ENCODE measurements at regions of chr3 and their contacts with region 1.

Region 1: DNA sequence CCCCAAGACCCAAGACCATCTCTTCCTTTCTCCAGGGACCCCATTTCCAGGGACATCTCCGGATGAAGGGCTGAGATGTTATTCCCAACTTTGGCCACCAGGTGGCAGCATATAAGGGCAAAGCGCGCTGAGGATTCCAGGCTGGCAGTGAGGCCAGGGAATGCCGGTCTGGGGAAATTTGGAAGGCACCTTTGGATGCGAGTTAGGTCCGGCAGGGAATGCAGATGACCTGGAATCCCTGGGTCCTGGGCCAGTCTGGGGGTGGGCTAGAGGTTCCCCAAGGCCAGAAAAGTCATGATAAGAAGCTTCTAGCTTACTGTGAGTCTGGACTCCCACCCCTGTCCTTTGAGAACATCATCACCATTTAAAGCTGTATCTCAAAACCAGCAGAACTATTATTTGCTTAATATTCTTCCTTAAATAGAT is 1.6 kb upstream of the CHST13 start:
- DNase-seq: peak; percentile 42
- H3K4me3 Mint-ChIP-seq: no peak overlapping the region
- H3K27ac Mint-ChIP-seq: no peak overlapping the region
- H3K4me1 Mint-ChIP-seq: no peaks in the 10 kb centered on the region
- H3K27me3 Mint-ChIP-seq: peaks cover 28% of the 10 kb centered on the region

Region 2: DNA sequence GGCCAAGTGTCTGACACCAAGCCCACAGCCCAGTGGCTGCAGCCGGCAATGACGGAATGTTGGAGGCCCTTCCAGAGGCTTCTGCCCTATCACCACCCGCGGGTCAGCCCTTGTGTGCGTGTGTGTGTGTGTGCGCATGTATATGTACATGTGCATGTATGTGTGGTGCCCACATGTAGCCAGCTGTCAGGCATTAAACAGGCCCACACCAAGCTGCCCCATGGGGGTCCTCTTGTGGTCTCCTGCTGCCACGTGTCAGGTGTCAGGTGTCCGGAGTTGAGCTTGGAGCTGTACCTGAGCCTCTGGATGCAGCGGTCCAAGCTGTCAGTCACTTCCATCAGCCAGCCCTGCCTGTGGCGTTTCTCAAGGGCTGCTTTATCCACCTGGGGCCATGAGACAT is 18.7 kb before region 1 on chr3:
- CTCF ChIA-PET with region 1: interaction called, 11 read pairs
- intact Hi-C with region 1: no loop called
- DNase-seq: no peak
- H3K4me3 Mint-ChIP-seq: no peak overlapping the region
- H3K27ac Mint-ChIP-seq: no peak overlapping the region
- H3K4me1 Mint-ChIP-seq: no peaks in the 10 kb centered on the region
- H3K27me3 Mint-ChIP-seq: no peaks in the 10 kb centered on the region

Region 3: DNA sequence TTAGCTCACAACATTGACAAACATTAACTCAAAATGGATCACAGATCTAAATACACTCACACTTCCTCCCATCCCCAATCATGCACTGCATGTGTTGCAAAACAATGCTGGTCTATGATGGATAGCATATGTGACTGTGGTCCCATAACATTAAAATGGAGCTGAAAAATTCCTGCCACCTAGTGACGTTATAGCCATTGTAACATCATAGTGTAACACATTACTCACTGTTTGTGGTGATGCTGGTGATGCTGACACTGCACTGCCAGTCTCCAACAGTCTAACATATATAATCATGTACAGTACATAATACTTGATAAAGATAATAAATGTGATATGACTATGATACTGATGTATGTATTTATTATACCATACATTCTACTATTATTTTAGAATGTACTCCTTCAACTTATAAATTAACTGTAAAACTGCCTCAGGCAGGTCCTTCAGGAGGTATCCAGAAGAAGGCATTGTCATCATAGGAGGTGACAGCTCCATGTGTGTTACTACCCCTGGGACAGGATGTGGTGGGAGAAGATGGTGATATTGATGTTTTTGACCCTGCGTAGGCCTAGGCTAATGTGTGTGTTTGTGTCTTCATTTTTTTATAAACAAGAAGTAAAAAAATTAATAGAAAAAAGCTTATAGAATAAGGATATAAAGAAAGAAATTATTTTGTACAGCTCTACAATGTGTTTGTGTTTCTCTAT is 91.3 kb after region 1 on chr3:
- CTCF ChIA-PET with region 1: interaction called, 3 read pairs
- intact Hi-C with region 1: loop called (anchors 2 kb)
- DNase-seq: no peak
- H3K4me3 Mint-ChIP-seq: no peak overlapping the region
- H3K27ac Mint-ChIP-seq: no peak overlapping the region
- H3K4me1 Mint-ChIP-seq: peaks cover 22% of the 10 kb centered on the region
- H3K27me3 Mint-ChIP-seq: no peaks in the 10 kb centered on the region

Region 4: DNA sequence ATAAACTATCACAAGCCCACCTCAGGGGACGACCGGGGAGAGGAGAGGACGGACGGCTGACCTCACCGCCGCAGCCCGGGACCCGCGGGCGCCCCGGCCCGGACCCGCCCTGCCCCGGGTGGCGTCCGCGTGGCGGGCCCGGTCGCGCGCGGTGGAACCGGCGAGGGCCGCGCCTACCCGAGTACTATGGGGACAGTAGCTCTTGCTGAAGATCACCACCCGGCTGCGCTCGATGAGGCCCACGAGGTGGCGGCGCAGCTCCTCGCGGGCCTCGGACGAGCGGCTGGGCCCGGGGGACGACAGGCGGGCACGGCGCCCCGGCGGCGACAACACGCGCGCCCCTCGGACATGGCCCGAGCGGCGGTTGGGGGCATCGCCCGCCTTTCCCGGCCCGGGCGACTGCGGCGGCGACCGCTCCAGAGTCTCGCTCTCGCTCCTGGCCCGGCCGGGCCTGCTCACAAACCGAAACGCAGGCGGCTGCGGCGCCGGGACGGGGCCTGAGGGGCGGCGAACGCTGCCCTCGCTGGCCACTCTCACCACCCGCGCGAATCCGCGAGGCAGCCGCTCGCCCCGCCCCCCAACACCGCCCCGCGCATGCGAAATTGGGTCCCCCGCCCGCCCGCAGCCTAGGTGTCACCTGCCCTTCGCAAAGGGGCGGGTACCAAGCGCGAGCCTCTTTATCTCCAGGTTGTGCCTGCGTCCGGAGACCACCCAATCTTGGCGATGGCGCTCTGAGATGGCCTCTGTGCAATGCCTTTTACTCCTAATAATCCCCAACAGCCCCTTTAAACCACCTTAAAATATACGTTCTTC is 132.4 kb after region 1 on chr3 and contains the start of gene TXNRD3:
- CTCF ChIA-PET with region 1: no interaction called
- intact Hi-C with region 1: loop called (anchors 2 kb)
- DNase-seq: peak; percentile 80
- H3K4me3 Mint-ChIP-seq: peak within 1 kb of the TSS; percentile 77
- H3K27ac Mint-ChIP-seq: no peak within 1 kb of the TSS
- H3K4me1 Mint-ChIP-seq: peaks cover 6% of the 10 kb centered on the region
- H3K27me3 Mint-ChIP-seq: peaks cover 2% of the 10 kb centered on the region
- total RNA-seq, gene TXNRD3: 3.1 to 4.6 TPM

Region 5: DNA sequence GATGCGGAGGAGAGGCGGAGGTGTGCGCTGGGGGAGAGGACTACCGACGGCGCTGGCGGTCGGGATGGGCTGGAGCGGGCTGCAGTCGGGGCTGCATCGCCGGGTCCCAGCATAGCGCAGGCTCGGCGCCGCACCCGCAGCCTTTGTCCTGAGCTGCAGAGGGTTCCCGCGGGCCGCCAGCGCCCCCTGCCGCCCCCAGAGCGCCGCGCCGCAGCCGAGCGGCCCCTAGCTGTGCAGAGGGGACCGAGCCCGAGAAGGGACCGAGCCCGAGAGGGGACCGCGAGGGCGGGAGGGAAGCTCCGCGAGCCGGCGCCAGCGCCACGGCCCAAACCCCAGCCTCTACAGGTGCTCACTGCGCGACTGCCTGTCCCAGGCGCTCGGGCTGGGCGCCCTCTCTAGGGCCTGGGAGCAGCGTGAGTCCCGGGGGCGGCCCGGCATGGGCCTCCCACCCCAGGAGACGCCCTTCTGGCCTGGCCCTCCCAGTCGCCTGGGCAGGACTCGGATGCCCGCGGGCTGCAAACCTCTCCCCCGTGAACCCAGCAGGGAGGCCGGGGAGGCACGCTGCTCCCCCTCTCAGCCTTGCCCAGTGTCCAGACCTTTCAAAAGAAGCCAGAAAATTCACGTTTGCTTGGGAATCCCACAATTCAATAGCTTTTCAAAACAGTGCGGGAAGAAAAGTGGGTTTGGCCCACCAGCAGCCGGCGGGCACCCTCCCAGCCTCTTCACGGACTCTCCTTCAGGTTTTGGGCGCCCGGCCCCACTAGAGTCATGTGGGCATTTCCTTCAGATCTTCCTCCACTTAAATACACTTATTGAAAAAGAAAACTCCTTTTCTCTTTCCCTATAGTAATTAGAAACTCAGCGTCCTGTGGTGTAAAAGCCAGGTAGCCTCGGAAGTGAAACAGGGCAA is 933.4 kb after region 1 on chr3:
- CTCF ChIA-PET with region 1: no interaction called
- intact Hi-C with region 1: loop called (anchors 1 kb)
- DNase-seq: peak; percentile 67
- H3K4me3 Mint-ChIP-seq: no peak overlapping the region
- H3K27ac Mint-ChIP-seq: no peak overlapping the region
- H3K4me1 Mint-ChIP-seq: peaks cover 16% of the 10 kb centered on the region
- H3K27me3 Mint-ChIP-seq: peaks cover 53% of the 10 kb centered on the region

Region 6: DNA sequence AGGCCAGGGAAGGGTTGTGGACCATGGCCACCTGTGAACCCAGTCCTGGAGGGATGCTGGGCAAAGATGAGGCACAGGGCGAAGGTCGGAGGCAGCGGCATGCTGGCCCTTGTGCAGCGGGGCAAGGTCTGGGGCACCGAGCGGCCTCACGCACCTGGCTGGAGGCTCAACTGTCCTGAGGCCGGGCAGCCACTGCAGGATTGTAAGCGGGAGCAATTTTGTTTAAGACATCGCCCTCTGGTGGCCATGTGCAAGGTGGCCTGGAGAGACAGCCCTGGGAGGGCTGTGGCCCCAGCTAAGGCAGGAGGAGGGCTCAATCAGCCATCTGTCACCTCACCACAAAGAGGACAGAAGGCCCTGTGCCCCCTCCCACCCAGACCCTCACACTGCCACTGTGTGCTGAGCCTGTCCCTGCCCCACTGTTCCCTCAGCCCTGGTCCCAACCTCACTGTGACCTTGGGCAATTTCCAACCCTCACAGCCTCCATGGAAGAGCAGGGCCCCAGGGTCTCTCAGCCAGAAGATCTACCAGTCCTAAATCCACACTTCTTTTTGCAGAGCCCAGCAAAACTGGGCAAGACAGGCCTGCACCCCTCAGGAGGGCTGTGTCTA is 1021.9 kb after region 1 on chr3:
- CTCF ChIA-PET with region 1: interaction called, 8 read pairs
- intact Hi-C with region 1: loop called (anchors 1 kb)
- DNase-seq: peak; percentile 80
- H3K4me3 Mint-ChIP-seq: no peak overlapping the region
- H3K27ac Mint-ChIP-seq: no peak overlapping the region
- H3K4me1 Mint-ChIP-seq: peaks cover 7% of the 10 kb centered on the region
- H3K27me3 Mint-ChIP-seq: no peaks in the 10 kb centered on the region

Measured in activated naive CD4-positive, alpha-beta T cell treated with anti-CD3 and anti-CD28 coated beads for 36 hours (primary cell).